ENCODE measurements at regions of chr13 and their contacts with region 1.

Region 1: DNA sequence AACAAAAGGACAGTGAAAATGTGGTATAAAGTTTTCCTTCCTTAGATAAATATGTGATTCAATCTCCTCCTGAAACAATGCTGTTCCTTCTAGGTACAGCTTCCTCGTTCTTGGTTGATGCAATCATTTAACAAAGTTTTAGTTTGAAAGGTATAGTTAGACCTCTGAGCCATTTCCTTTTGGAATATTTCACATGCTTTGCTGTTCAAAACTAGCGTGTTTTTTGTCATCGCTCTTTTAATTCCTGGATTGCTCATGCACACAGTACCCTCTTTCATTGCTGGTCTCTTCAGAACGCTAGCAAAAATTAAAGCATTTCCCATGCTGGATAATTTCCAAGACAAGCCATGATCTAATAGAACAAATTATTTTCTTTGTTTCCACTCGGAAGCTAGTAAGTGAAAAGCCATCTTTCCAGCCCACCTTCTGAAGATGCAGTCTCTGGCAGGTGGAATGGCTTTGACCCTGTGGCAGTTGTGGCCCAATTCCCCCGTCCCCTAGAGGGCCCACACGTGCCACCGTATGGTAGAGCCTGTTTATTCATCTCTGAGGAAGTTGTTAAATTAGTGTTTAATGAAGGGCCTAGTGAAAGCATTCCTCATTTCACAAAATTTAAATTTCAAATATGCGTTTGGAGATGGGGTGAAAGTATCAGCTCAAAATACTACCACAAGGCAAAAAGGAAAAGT is 1040.6 kb upstream of the SLC10A2 start:
- DNase-seq: peak; percentile 91
- H3K4me3 ChIP-seq: no peak overlapping the region
- H3K27ac ChIP-seq: peak overlapping the region; percentile 98
- H3K4me1 ChIP-seq: peaks cover 27% of the 10 kb centered on the region
- H3K27me3 ChIP-seq: no peaks in the 10 kb centered on the region
- CTCF ChIP-seq: peak; percentile 3 to 19
- POLR2A ChIP-seq: no peak

Region 2: DNA sequence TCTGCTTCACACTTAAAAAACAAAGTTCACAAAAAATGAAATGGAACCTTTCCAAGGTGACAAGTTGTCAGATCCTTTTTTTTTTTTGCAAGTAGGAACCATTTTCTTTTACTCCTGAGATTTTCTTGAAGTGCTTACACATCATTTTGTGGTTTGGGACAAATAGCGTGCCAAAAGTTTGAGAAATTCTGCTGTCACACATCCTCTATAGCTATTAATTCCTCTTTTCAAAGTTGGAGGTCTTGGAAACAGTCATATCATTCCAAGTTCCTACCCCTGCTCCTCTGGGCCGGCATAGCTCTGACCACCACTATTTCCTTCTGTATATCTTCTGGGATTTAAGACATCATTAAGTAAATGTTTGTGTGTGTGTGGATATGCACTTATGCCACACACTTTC is 619.0 kb before region 1 on chr13:
- CTCF ChIA-PET with region 1: no interaction called
- POLR2A ChIA-PET with region 1: no interaction called
- dilution Hi-C with region 1: no loop called
- intact Hi-C with region 1: no loop called
- DNase-seq: no peak
- H3K4me3 ChIP-seq: no peak overlapping the region
- H3K27ac ChIP-seq: no peak overlapping the region
- H3K4me1 ChIP-seq: no peaks in the 10 kb centered on the region
- H3K27me3 ChIP-seq: no peaks in the 10 kb centered on the region
- CTCF ChIP-seq: no peak
- POLR2A ChIP-seq: no peak

Region 3: DNA sequence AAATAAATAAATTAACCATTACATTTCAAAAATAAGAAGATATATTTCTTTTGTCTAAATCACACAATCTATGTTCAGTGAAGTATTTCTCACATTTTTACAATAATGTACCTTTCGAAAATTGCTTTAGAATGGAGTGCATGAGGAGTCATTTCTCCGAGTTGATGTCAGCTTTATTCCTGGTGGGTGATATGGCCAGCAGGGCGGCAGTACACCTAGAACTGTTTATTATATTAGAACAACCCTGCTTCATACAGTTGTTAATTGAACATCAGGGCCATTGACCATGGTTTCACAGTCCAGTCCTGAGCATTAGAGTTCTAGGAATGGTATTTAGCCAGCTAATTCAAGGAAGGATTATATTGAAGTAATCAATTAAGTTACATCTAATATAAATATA is 344.3 kb before region 1 on chr13:
- CTCF ChIA-PET with region 1: no interaction called
- POLR2A ChIA-PET with region 1: no interaction called
- dilution Hi-C with region 1: no loop called
- intact Hi-C with region 1: no loop called
- DNase-seq: no peak
- H3K4me3 ChIP-seq: no peak overlapping the region
- H3K27ac ChIP-seq: no peak overlapping the region
- H3K4me1 ChIP-seq: no peaks in the 10 kb centered on the region
- H3K27me3 ChIP-seq: no peaks in the 10 kb centered on the region
- CTCF ChIP-seq: no peak
- POLR2A ChIP-seq: no peak

Region 4: GRCh38 chr13:104006625-104007075 is 100.2 kb before region 1 on chr13:
- CTCF ChIA-PET with region 1: no interaction called
- POLR2A ChIA-PET with region 1: no interaction called
- dilution Hi-C with region 1: no loop called
- intact Hi-C with region 1: loop called (anchors 1 kb)
- DNase-seq: no peak
- H3K4me3 ChIP-seq: no peak overlapping the region
- H3K27ac ChIP-seq: no peak overlapping the region
- H3K4me1 ChIP-seq: peaks cover 28% of the 10 kb centered on the region
- H3K27me3 ChIP-seq: no peaks in the 10 kb centered on the region
- CTCF ChIP-seq: no peak
- POLR2A ChIP-seq: no peak

Region 5: GRCh38 chr13:104024416-104025170 is 82.3 kb before region 1 on chr13:
- CTCF ChIA-PET with region 1: no interaction called
- POLR2A ChIA-PET with region 1: no interaction called
- dilution Hi-C with region 1: no loop called
- intact Hi-C with region 1: loop called (anchors 1 kb)
- DNase-seq: peak; percentile 76
- H3K4me3 ChIP-seq: no peak overlapping the region
- H3K27ac ChIP-seq: peak overlapping the region; percentile 65
- H3K4me1 ChIP-seq: peaks cover 14% of the 10 kb centered on the region
- H3K27me3 ChIP-seq: no peaks in the 10 kb centered on the region
- CTCF ChIP-seq: no peak
- POLR2A ChIP-seq: no peak

Region 6: GRCh38 chr13:104422668-104423067 is 315.8 kb after region 1 on chr13:
- CTCF ChIA-PET with region 1: no interaction called
- POLR2A ChIA-PET with region 1: no interaction called
- dilution Hi-C with region 1: no loop called
- intact Hi-C with region 1: loop called (anchors 10 kb)
- DNase-seq: no peak
- H3K4me3 ChIP-seq: no peak overlapping the region
- H3K27ac ChIP-seq: no peak overlapping the region
- H3K4me1 ChIP-seq: peaks cover 8% of the 10 kb centered on the region
- H3K27me3 ChIP-seq: no peaks in the 10 kb centered on the region
- CTCF ChIP-seq: no peak
- POLR2A ChIP-seq: no peak

Region 7: DNA sequence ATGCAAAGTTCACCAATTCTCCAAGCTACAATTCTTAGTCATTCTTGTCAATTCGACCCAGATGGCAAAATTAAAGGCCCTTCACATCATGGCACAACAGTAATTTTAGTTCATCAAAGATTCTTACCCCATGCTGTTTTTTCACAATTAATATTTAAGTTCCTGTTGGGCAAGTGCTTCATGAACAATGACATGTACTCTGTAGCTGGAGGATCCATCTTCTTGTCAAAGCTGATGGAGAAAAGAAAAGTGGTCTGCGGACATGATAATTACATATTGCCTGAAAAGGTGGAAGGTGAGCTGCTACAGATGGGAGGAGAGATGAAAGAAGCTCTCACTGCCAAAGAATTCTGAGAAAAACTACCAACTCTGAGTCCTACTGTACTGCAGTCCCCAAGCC is 329.7 kb after region 1 on chr13:
- CTCF ChIA-PET with region 1: no interaction called
- POLR2A ChIA-PET with region 1: no interaction called
- dilution Hi-C with region 1: no loop called
- intact Hi-C with region 1: no loop called
- DNase-seq: no peak
- H3K4me3 ChIP-seq: no peak overlapping the region
- H3K27ac ChIP-seq: no peak overlapping the region
- H3K4me1 ChIP-seq: no peaks in the 10 kb centered on the region
- H3K27me3 ChIP-seq: no peaks in the 10 kb centered on the region
- CTCF ChIP-seq: no peak
- POLR2A ChIP-seq: no peak

Region 8: GRCh38 chr13:104447348-104447747 is 340.5 kb after region 1 on chr13:
- CTCF ChIA-PET with region 1: no interaction called
- POLR2A ChIA-PET with region 1: no interaction called
- dilution Hi-C with region 1: no loop called
- intact Hi-C with region 1: no loop called
- DNase-seq: no peak
- H3K4me3 ChIP-seq: no peak overlapping the region
- H3K27ac ChIP-seq: no peak overlapping the region
- H3K4me1 ChIP-seq: no peaks in the 10 kb centered on the region
- H3K27me3 ChIP-seq: no peaks in the 10 kb centered on the region
- CTCF ChIP-seq: no peak
- POLR2A ChIP-seq: no peak

Region 9: DNA sequence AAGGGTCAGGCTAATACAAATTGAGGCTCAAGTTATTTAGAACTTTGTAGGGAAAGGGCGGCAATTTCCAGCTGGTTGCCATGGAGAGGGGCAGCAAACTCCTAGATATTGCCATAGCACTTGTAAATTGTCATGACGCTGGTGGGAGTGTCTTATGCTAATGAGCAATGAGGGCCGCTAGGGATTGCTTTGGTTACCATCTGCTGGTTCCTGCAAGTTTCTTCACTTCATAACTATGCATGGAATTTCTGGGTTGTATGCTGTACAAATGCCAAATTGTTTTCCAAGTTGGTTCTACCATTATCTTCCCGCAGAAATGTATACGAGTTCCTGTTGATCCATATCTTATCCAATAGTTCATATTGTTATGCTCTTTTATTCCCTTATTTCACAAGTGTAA is 1089.2 kb after region 1 on chr13:
- CTCF ChIA-PET with region 1: no interaction called
- POLR2A ChIA-PET with region 1: no interaction called
- dilution Hi-C with region 1: no loop called
- intact Hi-C with region 1: loop called (anchors 1 kb)
- DNase-seq: peak; percentile 88
- H3K4me3 ChIP-seq: no peak overlapping the region
- H3K27ac ChIP-seq: peak overlapping the region; percentile 69
- H3K4me1 ChIP-seq: peaks cover 9% of the 10 kb centered on the region
- H3K27me3 ChIP-seq: no peaks in the 10 kb centered on the region
- CTCF ChIP-seq: no peak
- POLR2A ChIP-seq: no peak

Region 10: DNA sequence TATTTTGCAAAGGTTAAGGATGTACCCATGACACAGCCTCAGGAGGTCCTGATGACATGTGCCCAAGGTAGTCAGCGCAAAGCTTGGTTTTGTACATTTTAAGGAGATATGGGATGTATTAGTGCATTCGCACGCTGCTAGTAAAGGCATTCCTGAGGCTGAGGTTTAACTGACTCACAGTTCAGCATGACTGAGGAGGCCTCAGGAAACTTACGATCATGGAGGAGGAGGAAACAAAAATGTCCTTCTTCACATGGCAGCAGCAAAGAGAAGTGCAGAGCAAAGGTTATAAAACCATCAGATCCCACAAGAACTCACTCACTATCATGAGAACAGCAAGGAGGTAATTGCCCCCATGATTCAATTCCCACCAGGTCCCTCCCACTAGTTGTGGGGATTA is 1411.2 kb after region 1 on chr13:
- CTCF ChIA-PET with region 1: no interaction called
- POLR2A ChIA-PET with region 1: no interaction called
- dilution Hi-C with region 1: no loop called
- intact Hi-C with region 1: loop called (anchors 5 kb)
- DNase-seq: no peak
- H3K4me3 ChIP-seq: no peak overlapping the region
- H3K27ac ChIP-seq: no peak overlapping the region
- H3K4me1 ChIP-seq: peaks cover 4% of the 10 kb centered on the region
- H3K27me3 ChIP-seq: no peaks in the 10 kb centered on the region
- CTCF ChIP-seq: no peak
- POLR2A ChIP-seq: no peak

Measured in endothelial cell of umbilical vein (primary cell).